Activated naive CD4-positive, alpha-beta T cell treated with anti-CD3 and anti-CD28 coated beads for 36 hours (primary cell): ENCODE measurements at regions of chr21 and their contacts with region 1.

Region 1: GRCh38 chr21:18298228-18298627 is 53.6 kb downstream of the CHODL start:
- DNase-seq: no peak
- H3K4me3 Mint-ChIP-seq: no peak overlapping the region
- H3K27ac Mint-ChIP-seq: no peak overlapping the region
- H3K4me1 Mint-ChIP-seq: no peaks in the 10 kb centered on the region
- H3K27me3 Mint-ChIP-seq: no peaks in the 10 kb centered on the region

Region 2: GRCh38 chr21:18058731-18059398 is 239.4 kb before region 1 on chr21:
- CTCF ChIA-PET with region 1: no interaction called
- intact Hi-C with region 1: no loop called
- DNase-seq: no peak
- H3K4me3 Mint-ChIP-seq: no peak overlapping the region
- H3K27ac Mint-ChIP-seq: no peak overlapping the region
- H3K4me1 Mint-ChIP-seq: no peaks in the 10 kb centered on the region
- H3K27me3 Mint-ChIP-seq: no peaks in the 10 kb centered on the region

Region 3: GRCh38 chr21:18350216-18350615 is 52.0 kb after region 1 on chr21:
- CTCF ChIA-PET with region 1: no interaction called
- intact Hi-C with region 1: no loop called
- DNase-seq: no peak
- H3K4me3 Mint-ChIP-seq: no peak overlapping the region
- H3K27ac Mint-ChIP-seq: no peak overlapping the region
- H3K4me1 Mint-ChIP-seq: no peaks in the 10 kb centered on the region
- H3K27me3 Mint-ChIP-seq: no peaks in the 10 kb centered on the region

Region 4: GRCh38 chr21:18369115-18369514 is 70.9 kb after region 1 on chr21:
- CTCF ChIA-PET with region 1: no interaction called
- intact Hi-C with region 1: loop called (anchors 5 kb)
- DNase-seq: no peak
- H3K4me3 Mint-ChIP-seq: no peak overlapping the region
- H3K27ac Mint-ChIP-seq: no peak overlapping the region
- H3K4me1 Mint-ChIP-seq: no peaks in the 10 kb centered on the region
- H3K27me3 Mint-ChIP-seq: no peaks in the 10 kb centered on the region

Region 5: GRCh38 chr21:18499761-18500376 is 201.6 kb after region 1 on chr21:
- CTCF ChIA-PET with region 1: interaction called, 3 read pairs
- intact Hi-C with region 1: loop called (anchors 10 kb)
- DNase-seq: peak; percentile 71
- H3K4me3 Mint-ChIP-seq: no peak overlapping the region
- H3K27ac Mint-ChIP-seq: no peak overlapping the region
- H3K4me1 Mint-ChIP-seq: no peaks in the 10 kb centered on the region
- H3K27me3 Mint-ChIP-seq: no peaks in the 10 kb centered on the region

Region 6: DNA sequence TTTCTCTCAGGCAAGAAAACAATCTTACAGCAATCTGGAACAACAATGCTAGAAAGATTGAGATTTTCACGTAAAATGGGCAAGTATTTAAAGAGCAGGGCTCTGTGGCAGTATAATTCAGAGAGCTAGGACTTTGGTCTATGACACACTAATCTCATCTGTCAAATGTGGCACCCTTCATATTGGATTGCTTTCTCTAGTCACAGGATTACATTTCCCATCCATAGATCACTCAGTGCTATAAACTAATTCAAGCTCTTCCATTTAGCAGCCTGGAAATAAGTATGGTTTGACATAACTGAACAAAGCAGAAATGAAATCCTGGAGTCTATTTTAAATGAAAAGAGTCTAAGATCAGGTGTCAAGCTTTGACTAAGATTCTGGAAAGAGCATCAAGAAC is 368.5 kb after region 1 on chr21:
- CTCF ChIA-PET with region 1: no interaction called
- intact Hi-C with region 1: no loop called
- DNase-seq: no peak
- H3K4me3 Mint-ChIP-seq: no peak overlapping the region
- H3K27ac Mint-ChIP-seq: no peak overlapping the region
- H3K4me1 Mint-ChIP-seq: no peaks in the 10 kb centered on the region
- H3K27me3 Mint-ChIP-seq: no peaks in the 10 kb centered on the region